IMR-90 (cell line): ENCODE measurements at regions of chr1 and their contacts with region 1.

Region 1: DNA sequence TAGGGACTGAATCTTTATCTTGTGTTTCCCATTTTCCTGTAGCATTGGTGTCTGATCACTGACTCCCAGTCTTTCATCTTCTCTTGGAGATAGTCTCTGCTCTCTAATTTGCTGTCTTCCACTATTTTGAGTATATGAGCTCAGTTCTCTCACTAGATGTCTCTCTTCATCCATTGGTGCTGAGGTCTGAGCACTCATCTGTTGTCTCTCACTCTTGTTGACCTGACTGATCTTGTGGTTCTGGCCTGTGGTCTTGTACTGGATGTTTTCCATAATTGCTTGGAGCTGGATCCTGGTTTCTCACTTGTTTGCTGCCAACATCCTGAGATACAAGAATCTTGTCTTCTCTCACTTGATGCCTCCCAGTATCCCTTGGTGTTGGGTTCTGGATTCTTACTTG is 25.1 kb upstream of the S100A11 start:
- DNase-seq: no peak
- ATAC-seq: no peak
- H3K4me3 ChIP-seq: no peak overlapping the region
- H3K27ac ChIP-seq: no peak overlapping the region
- H3K4me1 ChIP-seq: no peaks in the 10 kb centered on the region
- H3K27me3 ChIP-seq: peaks cover 4% of the 10 kb centered on the region
- CTCF ChIP-seq: no peak
- POLR2A ChIP-seq: no peak
- RAD21 ChIP-seq: no peak

Region 2: GRCh38 chr1:151547119-151547899 is 514.6 kb before region 1 on chr1:
- CTCF ChIA-PET with region 1: no interaction called
- POLR2A ChIA-PET with region 1: no interaction called
- dilution Hi-C with region 1: no loop called
- in situ Hi-C with region 1: no loop called
- intact Hi-C with region 1: no loop called
- DNase-seq: peak; percentile 93
- ATAC-seq: peak; percentile 62
- H3K4me3 ChIP-seq: no peak overlapping the region
- H3K27ac ChIP-seq: peak overlapping the region; percentile 71
- H3K4me1 ChIP-seq: peaks cover 27% of the 10 kb centered on the region
- H3K27me3 ChIP-seq: no peaks in the 10 kb centered on the region
- CTCF ChIP-seq: no peak
- POLR2A ChIP-seq: no peak
- RAD21 ChIP-seq: no peak

Region 3: GRCh38 chr1:152182431-152182830 is 120.5 kb after region 1 on chr1:
- CTCF ChIA-PET with region 1: interaction called, 3 read pairs
- POLR2A ChIA-PET with region 1: no interaction called
- dilution Hi-C with region 1: no loop called
- in situ Hi-C with region 1: loop called (anchors 5 kb)
- intact Hi-C with region 1: no loop called
- DNase-seq: no peak
- ATAC-seq: no peak
- H3K4me3 ChIP-seq: no peak overlapping the region
- H3K27ac ChIP-seq: no peak overlapping the region
- H3K4me1 ChIP-seq: no peaks in the 10 kb centered on the region
- H3K27me3 ChIP-seq: no peaks in the 10 kb centered on the region
- CTCF ChIP-seq: peak; percentile 32
- POLR2A ChIP-seq: no peak
- RAD21 ChIP-seq: peak; percentile 32; the same call in 1 of the 2 replicates